ENCODE measurements at regions of chr6 and their contacts with region 1.

Region 1: DNA sequence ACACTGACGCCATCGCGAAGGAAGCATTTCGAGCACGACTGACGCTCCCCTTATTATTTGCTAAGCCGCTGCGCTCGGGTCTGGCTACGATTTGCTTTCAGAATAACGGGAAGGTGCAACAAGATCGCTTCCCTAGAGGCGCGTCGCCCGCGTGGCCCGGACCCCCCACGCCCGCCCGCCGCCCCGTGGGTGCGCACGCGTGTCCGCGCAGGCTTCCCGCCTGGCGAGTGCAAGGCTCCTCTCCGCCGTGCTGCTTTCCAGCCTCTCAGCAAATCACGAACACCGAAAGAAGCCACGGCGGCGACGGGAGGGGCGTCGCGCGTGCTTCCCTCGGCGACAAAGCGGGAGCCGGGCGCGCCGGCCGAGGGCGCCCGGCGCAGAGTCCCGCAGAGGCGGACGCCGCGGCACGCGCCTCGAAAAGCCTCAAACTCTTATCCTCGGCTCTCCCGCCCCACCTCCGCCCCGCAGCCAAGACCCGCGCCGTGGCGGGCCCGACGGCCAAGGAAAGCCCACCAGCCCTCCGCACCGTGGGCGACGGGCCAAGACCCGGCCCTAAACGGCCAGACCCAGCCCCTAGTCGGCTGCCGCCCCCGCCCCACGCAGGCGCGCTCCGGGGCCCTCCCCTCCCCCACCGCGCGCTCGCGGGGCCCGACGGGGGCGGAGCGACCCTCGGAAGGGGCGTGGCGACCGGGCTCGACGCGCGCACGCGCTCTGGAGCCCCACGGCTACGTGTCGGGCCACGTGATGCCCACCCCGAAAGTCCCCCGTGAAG is 987 bp upstream of the QKI start:
- DNase-seq: peak; percentile 92
- H3K4me3 Mint-ChIP-seq: peak overlapping the region; percentile 83
- H3K27ac Mint-ChIP-seq: peak overlapping the region; percentile 99
- H3K4me1 Mint-ChIP-seq: peaks cover 14% of the 10 kb centered on the region
- H3K27me3 Mint-ChIP-seq: no peaks in the 10 kb centered on the region
- CTCF ChIP-seq: no peak

Region 2: DNA sequence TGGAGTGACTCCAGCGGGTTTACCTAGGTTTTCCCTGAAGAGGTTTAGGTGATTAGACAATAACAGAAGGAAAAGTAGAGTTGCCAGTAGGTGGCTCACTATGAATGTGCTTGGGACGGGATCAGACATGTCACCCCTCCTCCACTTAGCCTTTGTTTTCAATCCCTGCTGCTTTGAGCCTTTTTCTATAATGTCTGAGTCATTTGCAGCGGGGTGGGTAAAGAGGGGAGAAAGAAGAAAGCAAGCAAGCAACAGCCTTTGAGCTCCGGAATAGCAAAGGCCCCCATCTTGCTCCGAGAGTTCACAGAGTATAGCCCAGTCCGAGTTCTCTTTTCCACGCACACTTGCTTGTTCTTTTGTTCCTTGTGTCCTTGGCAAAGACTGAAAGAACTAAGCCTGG is 556.6 kb before region 1 on chr6:
- CTCF ChIA-PET with region 1: no interaction called
- intact Hi-C with region 1: loop called (anchors 5 kb)
- DNase-seq: peak; percentile 59
- H3K4me3 Mint-ChIP-seq: peak overlapping the region; percentile 57
- H3K27ac Mint-ChIP-seq: peak overlapping the region; percentile 44
- H3K4me1 Mint-ChIP-seq: peaks cover 7% of the 10 kb centered on the region
- H3K27me3 Mint-ChIP-seq: no peaks in the 10 kb centered on the region
- CTCF ChIP-seq: peak; percentile 50

Region 3: DNA sequence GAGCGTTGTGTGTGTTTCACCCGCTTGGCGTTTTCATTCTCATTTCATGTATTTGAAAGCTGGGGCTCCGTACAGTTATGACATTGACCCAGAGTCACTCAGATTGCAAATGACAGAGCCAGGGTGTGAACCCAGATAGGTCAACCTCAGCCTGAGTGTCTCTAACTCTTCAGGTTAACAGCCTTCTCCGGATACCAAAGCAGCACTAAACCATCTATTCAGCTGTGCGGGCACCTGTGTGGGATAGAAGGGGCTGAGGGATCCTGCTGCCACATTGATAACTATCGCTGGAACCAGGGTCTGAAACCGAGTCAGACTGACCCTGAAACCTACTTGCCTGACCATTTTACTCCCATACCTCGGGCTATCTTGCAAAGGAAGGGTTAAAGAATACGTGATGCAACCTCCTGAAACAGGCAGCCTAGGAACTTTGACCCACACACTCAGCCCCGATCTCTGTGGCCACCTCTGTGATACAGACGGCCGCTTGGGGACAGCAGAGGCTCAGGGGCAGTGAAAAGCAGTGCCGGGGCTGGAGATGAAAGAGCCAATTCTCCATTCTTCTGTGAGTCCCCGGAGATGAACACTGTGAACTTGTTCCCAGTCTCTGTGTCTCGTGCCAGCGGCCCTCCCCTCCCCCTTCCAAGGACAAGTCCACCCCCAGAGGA is 232.5 kb before region 1 on chr6:
- CTCF ChIA-PET with region 1: no interaction called
- intact Hi-C with region 1: loop called (anchors 2 kb)
- DNase-seq: peak; percentile 84
- H3K4me3 Mint-ChIP-seq: no peak overlapping the region
- H3K27ac Mint-ChIP-seq: peak overlapping the region; percentile 97
- H3K4me1 Mint-ChIP-seq: peaks cover 23% of the 10 kb centered on the region
- H3K27me3 Mint-ChIP-seq: no peaks in the 10 kb centered on the region
- CTCF ChIP-seq: peak; percentile 74

Region 4: DNA sequence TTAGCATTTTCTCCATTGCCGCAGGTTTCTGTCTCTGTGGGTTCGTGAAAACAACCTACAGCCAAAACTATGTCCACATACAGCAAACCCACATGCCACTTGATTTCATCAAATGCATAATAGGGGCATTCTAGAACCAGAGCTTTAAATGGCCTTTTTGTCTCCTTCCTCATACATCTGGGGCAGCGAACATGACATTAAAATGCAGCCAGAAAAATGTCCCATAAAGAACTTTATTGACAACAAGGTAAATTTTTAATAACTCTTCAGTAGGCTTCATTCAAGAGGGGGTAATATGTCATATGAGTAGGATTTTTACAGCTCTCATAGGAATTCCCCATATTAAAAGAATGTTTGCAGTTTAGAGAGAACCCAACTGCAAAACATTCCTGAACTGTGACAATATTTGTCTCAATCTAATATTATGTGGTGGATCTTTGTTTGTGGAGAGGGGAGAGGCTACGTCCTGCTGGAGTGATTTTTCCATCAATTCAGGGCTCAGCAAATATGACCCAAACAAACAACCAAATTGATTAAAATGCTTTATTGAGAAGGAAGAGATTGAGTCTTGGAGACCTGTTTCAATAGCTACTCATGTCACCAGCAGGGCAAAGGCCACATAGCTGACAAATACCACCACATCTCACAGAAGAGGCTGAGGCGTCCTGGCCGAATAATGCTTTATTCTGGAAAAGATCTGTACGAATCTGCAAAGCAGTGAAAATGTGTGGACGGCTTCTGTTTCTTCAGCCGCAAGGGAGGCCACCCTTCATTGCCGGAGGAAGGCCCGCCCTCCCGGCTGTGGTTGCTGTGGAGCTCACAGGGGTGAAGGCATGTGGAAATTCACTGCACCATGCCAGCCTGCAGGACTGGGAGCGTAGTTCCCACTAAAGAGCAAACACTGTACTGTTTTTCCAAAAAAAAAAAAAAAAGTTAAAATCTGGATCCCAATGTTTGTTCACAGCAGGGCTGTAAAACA is 88.8 kb before region 1 on chr6:
- CTCF ChIA-PET with region 1: no interaction called
- intact Hi-C with region 1: loop called (anchors 2 kb)
- DNase-seq: peak; percentile 79
- H3K4me3 Mint-ChIP-seq: peak overlapping the region; percentile 63
- H3K27ac Mint-ChIP-seq: peak overlapping the region; percentile 93
- H3K4me1 Mint-ChIP-seq: peaks cover 62% of the 10 kb centered on the region
- H3K27me3 Mint-ChIP-seq: no peaks in the 10 kb centered on the region
- CTCF ChIP-seq: no peak

Region 5: DNA sequence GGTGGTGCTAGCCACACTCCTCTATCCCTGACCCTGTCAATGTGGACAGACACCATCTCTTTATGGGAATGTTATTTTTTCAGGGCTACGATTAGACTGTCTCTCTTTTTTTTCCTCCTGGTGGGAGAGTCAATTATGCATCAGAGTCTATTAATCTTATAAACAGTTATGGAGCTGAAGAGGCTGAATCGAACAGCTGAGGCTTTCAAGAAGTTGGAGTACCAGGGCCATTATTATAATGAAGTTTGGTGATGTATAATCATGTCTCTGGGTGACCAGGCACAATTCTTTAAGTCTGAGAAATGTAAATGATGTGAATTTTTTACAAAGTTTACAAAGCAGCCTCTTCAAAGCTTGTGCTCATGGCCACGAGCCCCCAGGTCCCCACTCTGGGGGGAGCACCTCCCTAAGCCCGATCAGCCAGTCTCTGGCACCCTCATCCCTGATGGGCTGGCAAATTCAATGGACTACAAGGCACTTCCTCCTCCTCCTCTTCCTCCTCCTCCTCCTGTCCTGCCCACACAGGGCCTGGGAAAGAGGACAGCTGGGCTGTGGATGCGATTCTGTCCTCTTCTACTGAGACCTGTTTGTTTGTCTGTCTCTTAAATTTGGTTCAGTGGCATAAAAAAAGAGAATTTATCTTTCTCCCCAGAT is 42.9 kb before region 1 on chr6:
- CTCF ChIA-PET with region 1: no interaction called
- intact Hi-C with region 1: no loop called
- DNase-seq: no peak
- H3K4me3 Mint-ChIP-seq: no peak overlapping the region
- H3K27ac Mint-ChIP-seq: no peak overlapping the region
- H3K4me1 Mint-ChIP-seq: no peaks in the 10 kb centered on the region
- H3K27me3 Mint-ChIP-seq: peaks cover 16% of the 10 kb centered on the region
- CTCF ChIP-seq: no peak

Region 6: DNA sequence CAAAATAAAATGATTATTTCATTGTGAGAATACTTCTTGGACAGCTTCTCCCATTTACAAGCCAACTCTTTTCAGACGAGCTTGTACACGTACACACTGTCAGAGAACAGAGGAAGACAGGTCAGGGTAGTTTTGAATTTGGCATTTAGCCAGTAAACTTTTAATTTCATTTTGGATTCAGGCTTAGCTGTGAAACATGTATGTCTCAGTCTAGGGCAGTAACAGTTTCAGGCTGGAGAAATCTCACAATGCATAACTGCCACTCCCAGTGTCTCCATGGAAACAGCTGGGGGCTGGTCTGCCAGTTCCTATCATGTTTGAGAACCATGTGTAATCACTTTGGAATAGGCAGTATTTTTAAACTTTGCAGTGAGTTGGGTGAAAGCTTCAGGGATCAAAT is 21.0 kb before region 1 on chr6:
- CTCF ChIA-PET with region 1: interaction called, 6 read pairs
- intact Hi-C with region 1: loop called (anchors 2 kb)
- DNase-seq: peak; percentile 69
- H3K4me3 Mint-ChIP-seq: peak overlapping the region; percentile 60
- H3K27ac Mint-ChIP-seq: peak overlapping the region; percentile 75
- H3K4me1 Mint-ChIP-seq: peaks cover 29% of the 10 kb centered on the region
- H3K27me3 Mint-ChIP-seq: no peaks in the 10 kb centered on the region
- CTCF ChIP-seq: no peak

Region 7: GRCh38 chr6:163466839-163467390 is 53.4 kb after region 1 on chr6:
- CTCF ChIA-PET with region 1: no interaction called
- intact Hi-C with region 1: no loop called
- DNase-seq: no peak
- H3K4me3 Mint-ChIP-seq: no peak overlapping the region
- H3K27ac Mint-ChIP-seq: no peak overlapping the region
- H3K4me1 Mint-ChIP-seq: peaks cover 25% of the 10 kb centered on the region
- H3K27me3 Mint-ChIP-seq: no peaks in the 10 kb centered on the region
- CTCF ChIP-seq: no peak

Region 8: GRCh38 chr6:163513570-163514166 is 100.1 kb after region 1 on chr6:
- CTCF ChIA-PET with region 1: no interaction called
- intact Hi-C with region 1: loop called (anchors 5 kb)
- DNase-seq: no peak
- H3K4me3 Mint-ChIP-seq: no peak overlapping the region
- H3K27ac Mint-ChIP-seq: peak overlapping the region; percentile 76
- H3K4me1 Mint-ChIP-seq: peaks cover 48% of the 10 kb centered on the region
- H3K27me3 Mint-ChIP-seq: no peaks in the 10 kb centered on the region
- CTCF ChIP-seq: no peak

Region 9: GRCh38 chr6:163572612-163573011 is 159.1 kb after region 1 on chr6:
- CTCF ChIA-PET with region 1: interaction called, 3 read pairs
- intact Hi-C with region 1: loop called (anchors 2 kb)
- DNase-seq: peak; percentile 34
- H3K4me3 Mint-ChIP-seq: peak overlapping the region; percentile 7
- H3K27ac Mint-ChIP-seq: peak overlapping the region; percentile 82
- H3K4me1 Mint-ChIP-seq: peaks cover 31% of the 10 kb centered on the region
- H3K27me3 Mint-ChIP-seq: no peaks in the 10 kb centered on the region
- CTCF ChIP-seq: no peak